HAP-1 (cell line): ENCODE measurements at regions of chr4 and their contacts with region 1.

Region 1: GRCh38 chr4:3106339-3107186 is 32.1 kb downstream of the HTT start:
- DNase-seq: peak; percentile 73 to 86
- H3K4me3 ChIP-seq: no peak overlapping the region
- H3K4me1 ChIP-seq: no peaks in the 10 kb centered on the region
- H3K27me3 ChIP-seq: no peaks in the 10 kb centered on the region

Region 2: GRCh38 chr4:3074078-3074795 is 32.3 kb before region 1 on chr4 and contains the starts of genes HTT and HTT-AS:
- in situ Hi-C with region 1: no loop called
- DNase-seq: peak; percentile 84 to 98
- H3K4me3 ChIP-seq: peak within 1 kb of the TSS; percentile 100
- H3K4me1 ChIP-seq: peaks cover 5% of the 10 kb centered on the region
- H3K27me3 ChIP-seq: no peaks in the 10 kb centered on the region

Region 3: DNA sequence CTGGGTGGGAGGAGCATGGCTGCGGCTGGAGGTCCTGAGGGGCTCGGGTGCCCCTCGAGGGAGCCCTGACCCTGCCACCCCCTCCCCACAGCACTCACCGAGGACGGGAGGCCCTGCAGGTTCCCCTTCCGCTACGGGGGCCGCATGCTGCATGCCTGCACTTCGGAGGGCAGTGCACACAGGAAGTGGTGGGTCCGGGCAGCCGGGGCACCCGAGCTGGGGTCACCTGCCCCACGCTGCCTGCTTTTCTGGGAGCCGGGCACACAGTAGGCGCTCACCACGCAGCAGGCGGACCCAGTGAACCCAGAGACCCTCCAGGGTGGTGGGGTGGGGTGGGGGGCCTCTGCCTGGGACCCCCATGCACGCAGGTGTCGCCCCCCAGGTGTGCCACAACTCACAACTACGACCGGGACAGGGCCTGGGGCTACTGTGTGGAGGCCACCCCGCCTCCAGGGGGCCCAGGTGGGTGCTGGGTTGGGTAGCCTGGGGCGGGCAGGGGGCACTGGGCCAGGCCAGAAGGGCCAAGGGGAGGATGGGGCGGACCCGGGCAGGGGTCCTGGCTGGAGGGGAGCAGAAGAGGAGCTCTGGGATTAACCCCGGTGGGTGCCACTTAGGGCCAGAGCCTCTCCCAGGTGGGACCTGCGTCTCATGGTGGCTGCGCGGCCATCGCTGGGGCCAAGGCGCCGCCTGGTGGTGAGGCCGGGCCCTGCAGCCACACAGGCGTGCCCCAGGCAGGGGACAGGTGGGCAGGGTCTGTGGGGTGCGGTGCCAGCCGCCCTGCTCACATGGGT is 336.6 kb after region 1 on chr4:
- in situ Hi-C with region 1: loop called (anchors 10 kb)
- DNase-seq: peak; percentile 5 to 74
- H3K4me3 ChIP-seq: no peak overlapping the region
- H3K4me1 ChIP-seq: no peaks in the 10 kb centered on the region
- H3K27me3 ChIP-seq: no peaks in the 10 kb centered on the region